CD14-positive monocyte (primary cell): ENCODE measurements at regions of chr1 and their contacts with region 1.

Region 1: DNA sequence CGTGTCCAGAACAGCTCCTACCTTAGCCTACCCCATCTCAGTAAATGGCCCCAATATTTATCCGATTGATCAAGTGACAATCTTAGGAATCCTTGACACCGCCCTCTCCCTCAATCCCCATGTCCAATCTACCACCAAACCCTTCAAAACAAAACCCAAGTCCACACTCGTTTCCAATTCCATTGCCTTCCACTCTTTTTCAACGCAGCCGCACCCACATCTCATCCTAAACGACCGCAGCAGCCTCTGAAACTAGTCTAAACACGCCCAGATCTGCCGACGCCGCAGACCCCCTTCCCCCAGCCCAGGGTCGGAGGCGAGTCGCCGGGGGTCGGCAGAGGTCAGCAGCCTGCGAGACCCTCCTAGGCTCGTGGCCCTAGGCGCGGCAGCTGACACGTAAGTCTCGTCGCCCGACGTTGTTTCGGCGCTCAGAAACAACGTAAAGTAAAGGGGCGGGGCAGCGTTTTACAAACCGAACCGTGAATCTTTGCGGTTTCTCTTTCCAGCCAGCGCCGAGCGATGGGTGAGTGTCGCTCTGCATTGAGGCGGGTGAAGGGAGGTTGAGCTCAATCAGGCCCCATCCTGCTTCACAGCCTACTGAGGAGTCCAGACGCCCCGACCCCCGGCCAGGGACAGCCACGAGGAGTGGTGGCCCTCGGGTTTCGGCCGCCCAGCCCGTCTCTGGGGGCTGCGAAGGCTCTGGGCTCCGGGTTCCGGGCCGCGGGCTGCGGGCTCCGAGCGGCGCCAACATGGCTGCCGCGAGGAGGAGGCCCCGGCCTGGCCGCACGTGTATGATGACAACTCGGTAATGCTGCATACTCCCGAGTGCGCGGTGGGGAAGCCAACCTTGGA is at the start of gene RPS8:
- DNase-seq: peak; percentile 88 to 91 (median 90)
- H3K4me3 ChIP-seq: peak within 1 kb of the TSS; percentile 81 to 90 (median 86)
- H3K4me3 Mint-ChIP-seq: peak within 1 kb of the TSS; percentile 92 to 96
- H3K27ac ChIP-seq: peak within 1 kb of the TSS; percentile 86 to 93
- H3K27ac Mint-ChIP-seq: peak within 1 kb of the TSS; percentile 96 to 100 (median 98)
- H3K4me1 ChIP-seq: peaks cover 23 to 31% of the 10 kb centered on the region in 2 donors
- H3K4me1 Mint-ChIP-seq: peaks cover 34% of the 10 kb centered on the region
- H3K27me3 ChIP-seq: no peaks in the 10 kb centered on the region
- H3K27me3 Mint-ChIP-seq: no peaks in the 10 kb centered on the region
- CTCF ChIP-seq: no peak
- polyA plus RNA-seq, gene RPS8: 413 to 1,619 (median 419) TPM

Region 2: DNA sequence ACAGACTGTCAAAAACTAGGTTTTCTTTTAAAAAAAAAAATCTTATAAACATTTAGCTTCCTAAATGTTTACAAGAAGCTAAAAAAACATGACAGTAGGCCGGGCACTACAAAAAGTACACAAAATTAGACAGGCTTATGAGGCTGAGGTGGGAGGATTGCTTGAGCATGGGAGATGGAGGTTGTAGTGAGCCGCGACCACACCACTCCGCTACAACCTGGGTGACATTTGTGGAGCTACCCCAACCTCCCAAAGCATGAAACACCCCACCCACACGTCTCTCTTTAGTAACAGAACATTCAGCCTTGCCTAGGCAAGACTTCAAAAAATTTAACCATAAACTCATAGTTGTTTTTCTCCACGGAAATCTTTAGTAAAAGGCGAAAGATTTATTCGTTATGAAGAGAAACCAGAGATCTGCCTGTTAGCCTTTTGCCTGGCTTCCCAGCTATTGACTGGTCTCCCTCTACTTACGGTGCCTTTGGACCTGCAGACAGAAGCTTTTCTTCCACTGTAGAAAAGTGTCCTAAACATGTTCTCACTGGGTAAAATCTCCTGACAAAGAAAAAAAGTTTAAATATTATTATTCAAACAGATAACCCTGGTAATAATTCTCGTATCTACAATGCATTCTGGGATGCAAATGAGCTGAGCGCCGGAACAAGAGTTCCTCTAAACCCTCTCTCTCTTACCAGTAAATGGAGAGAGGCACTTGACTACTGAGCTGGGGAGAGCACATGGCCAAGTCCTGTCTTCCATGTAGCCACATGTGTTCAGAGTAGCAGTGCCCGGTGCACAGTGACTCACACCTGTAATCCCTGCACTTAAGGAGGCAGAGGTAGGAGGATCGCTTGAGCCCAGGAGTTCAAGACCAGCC is 53.6 kb before region 1 on chr1:
- intact Hi-C with region 1: loop called in 1 of 2 experiments (anchors 10 kb)
- DNase-seq: peak; percentile 89 to 95 (median 91)
- H3K4me3 ChIP-seq: peak overlapping the region in 1 of 3 experiments; percentile 38
- H3K4me3 Mint-ChIP-seq: peak overlapping the region; percentile 1 to 71
- H3K27ac ChIP-seq: peak overlapping the region; percentile 55 to 89
- H3K27ac Mint-ChIP-seq: peak overlapping the region; percentile 92 to 98 (median 96)
- H3K4me1 ChIP-seq: peaks cover 42 to 56% of the 10 kb centered on the region in 2 donors
- H3K4me1 Mint-ChIP-seq: peaks cover 55% of the 10 kb centered on the region
- H3K27me3 ChIP-seq: no peaks in the 10 kb centered on the region
- H3K27me3 Mint-ChIP-seq: peaks cover 2 to 8% (median 4%) of the 10 kb centered on the region in 3 donors
- CTCF ChIP-seq: no peak

Region 3: DNA sequence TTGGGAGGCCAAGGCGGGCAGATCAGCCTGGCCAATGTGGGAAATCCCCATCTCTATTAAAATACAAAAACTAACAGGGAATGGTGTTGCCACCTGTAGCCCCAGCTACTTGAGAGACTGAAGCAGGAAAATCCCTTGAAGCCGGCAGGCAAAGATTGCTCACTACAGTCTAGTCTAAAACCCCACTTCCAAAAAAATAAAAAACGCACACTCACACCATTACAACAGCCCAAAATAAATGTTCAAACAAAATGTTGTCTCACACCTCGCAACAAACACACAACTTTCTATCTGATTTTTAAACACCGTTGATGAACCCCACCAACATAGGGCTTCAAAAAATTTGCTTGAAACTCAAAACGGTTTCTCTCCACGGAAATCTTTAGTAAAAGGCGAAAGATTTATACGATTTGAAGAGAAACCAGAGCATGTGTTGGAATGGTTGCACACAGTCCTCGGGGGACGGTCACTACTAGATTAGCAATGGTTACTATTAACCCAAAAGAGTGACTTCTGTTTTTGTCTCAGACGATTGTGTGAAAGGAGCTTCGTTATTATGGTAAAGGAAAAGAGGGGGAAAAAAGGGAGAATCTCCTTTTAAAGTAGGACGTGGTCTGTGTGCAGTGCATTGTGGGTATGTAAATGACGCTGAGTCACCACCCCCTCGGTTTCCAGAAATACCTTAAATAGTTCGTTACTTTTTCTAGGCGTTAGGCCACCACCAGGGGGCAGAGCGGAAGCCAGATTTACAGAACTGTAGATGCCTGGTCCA is 44.4 kb before region 1 on chr1 and contains the start of gene RNU5D-1:
- intact Hi-C with region 1: loop called (anchors 2 to 10 kb)
- DNase-seq: peak; percentile 93 to 98 (median 97)
- H3K4me3 ChIP-seq: peak within 1 kb of the TSS; percentile 29 to 54 (median 40)
- H3K4me3 Mint-ChIP-seq: peak within 1 kb of the TSS; percentile 32 to 82
- H3K27ac ChIP-seq: peak within 1 kb of the TSS; percentile 75 to 100
- H3K27ac Mint-ChIP-seq: peak within 1 kb of the TSS; percentile 99 to 100 (median 100)
- H3K4me1 ChIP-seq: peaks cover 37 to 40% of the 10 kb centered on the region in 2 donors
- H3K4me1 Mint-ChIP-seq: peaks cover 45% of the 10 kb centered on the region
- H3K27me3 ChIP-seq: no peaks in the 10 kb centered on the region
- H3K27me3 Mint-ChIP-seq: peaks cover 0 to 5% (median 0%) of the 10 kb centered on the region in 3 donors
- CTCF ChIP-seq: peak; percentile 90
- polyA plus RNA-seq, gene RNU5D-1: not detected

Region 4: DNA sequence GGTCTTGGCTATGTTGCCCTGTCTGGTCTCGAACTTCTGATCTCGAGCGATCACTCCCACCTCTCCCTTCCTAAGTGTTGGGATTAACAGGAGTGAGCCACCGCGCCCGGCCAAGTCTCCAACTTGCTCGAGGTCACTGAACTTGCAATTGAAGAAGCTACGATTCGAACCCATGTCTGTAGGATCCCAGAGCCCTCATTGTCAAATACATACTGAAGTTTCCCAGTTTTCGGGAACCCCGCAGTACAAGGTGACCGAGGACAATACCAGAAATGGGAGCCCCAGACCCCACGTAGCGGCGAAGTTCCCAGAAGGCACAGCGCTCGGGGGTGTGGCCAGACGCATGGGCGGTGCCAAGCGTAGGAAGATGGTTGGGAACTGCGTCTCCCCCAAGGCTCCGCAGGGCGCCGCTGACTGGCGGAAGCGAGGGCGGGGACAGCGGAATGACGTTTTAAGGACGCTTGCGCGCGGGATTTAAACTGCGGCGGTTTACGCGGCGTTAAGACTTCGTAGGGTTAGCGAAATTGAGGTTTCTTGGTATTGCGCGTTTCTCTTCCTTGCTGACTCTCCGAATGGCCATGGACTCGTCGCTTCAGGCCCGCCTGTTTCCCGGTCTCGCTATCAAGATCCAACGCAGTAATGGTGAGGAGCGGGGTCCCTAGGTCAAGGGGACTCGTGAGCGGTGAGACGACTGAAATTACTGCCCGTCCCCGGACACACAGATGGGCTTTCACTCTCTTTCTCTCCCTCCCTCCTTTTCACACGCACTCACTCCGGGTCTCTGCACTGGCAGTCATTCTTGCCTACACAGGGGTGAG is 35.7 kb before region 1 on chr1 and contains the start of gene KIF2C:
- intact Hi-C with region 1: loop called in 1 of 2 experiments (anchors 5 kb)
- DNase-seq: peak; percentile 96 to 98 (median 96)
- H3K4me3 ChIP-seq: peak within 1 kb of the TSS; percentile 73 to 93 (median 93)
- H3K4me3 Mint-ChIP-seq: peak within 1 kb of the TSS; percentile 95 to 96
- H3K27ac ChIP-seq: peak within 1 kb of the TSS; percentile 71 to 95
- H3K27ac Mint-ChIP-seq: peak within 1 kb of the TSS; percentile 95 to 98 (median 96)
- H3K4me1 ChIP-seq: peaks cover 20 to 25% of the 10 kb centered on the region in 2 donors
- H3K4me1 Mint-ChIP-seq: peaks cover 30% of the 10 kb centered on the region
- H3K27me3 ChIP-seq: no peaks in the 10 kb centered on the region
- H3K27me3 Mint-ChIP-seq: peaks cover 0 to 5% (median 0%) of the 10 kb centered on the region in 3 donors
- CTCF ChIP-seq: no peak
- polyA plus RNA-seq, gene KIF2C: 0.13 to 0.29 (median 0.24) TPM

Region 5: DNA sequence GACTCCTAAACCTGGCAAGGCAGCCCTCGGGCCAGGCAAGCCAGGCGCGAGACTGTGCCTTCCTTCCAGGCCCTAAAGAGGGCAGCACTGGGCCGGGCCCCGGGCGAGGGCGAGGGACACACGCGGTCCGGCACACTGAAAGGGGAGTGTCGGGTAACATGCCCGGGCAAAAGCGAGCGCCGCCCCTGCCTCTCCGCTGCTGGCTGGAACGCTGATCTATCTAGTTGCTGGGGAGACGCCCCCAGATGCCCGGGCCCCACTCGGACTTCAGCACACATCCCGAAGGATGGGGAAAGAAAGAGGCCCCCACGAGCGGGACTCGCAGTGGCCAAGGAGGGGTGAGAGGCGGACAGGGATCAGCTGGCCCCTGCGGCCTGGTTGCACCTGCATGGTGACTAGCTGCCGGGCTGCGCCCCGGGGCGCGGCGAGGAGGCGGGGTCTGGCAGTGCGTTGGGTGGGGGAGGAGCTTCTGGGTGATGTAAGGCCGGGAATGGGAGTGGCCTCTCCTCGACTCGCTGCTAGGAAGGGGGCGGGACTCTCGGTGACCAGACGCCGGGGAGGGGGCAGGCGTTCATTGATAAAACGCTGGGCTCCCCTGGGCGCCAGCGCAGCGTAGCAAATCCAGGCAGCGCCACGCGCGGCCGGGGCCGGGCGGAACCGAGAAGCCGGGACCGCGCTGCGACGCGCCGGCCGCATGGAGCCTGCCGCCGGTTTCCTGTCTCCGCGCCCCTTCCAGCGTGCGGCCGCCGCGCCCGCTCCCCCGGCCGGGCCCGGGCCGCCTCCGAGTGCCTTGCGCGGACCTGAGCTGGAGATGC is 24.7 kb after region 1 on chr1 and contains the start of gene PLK3:
- intact Hi-C with region 1: no loop called
- DNase-seq: peak; percentile 97 to 99 (median 99)
- H3K4me3 ChIP-seq: peak within 1 kb of the TSS; percentile 60 to 99 (median 76)
- H3K4me3 Mint-ChIP-seq: peak within 1 kb of the TSS; percentile 94 to 98
- H3K27ac ChIP-seq: peak within 1 kb of the TSS; percentile 90 to 95
- H3K27ac Mint-ChIP-seq: peak within 1 kb of the TSS; percentile 98 to 100 (median 99)
- H3K4me1 ChIP-seq: peaks cover 29 to 38% of the 10 kb centered on the region in 2 donors
- H3K4me1 Mint-ChIP-seq: peaks cover 20% of the 10 kb centered on the region
- H3K27me3 ChIP-seq: no peaks in the 10 kb centered on the region
- H3K27me3 Mint-ChIP-seq: peaks cover 1 to 9% (median 4%) of the 10 kb centered on the region in 3 donors
- CTCF ChIP-seq: peak; percentile 90
- polyA plus RNA-seq, gene PLK3: 15.8 to 285 (median 28.1) TPM

Region 6: GRCh38 chr1:44862829-44863401 is 87.6 kb after region 1 on chr1:
- intact Hi-C with region 1: no loop called
- DNase-seq: no peak
- H3K4me3 ChIP-seq: no peak overlapping the region
- H3K4me3 Mint-ChIP-seq: no peak overlapping the region
- H3K27ac ChIP-seq: no peak overlapping the region
- H3K27ac Mint-ChIP-seq: no peak overlapping the region
- H3K4me1 ChIP-seq: peaks cover 19 to 24% of the 10 kb centered on the region in 2 donors
- H3K4me1 Mint-ChIP-seq: peaks cover 20% of the 10 kb centered on the region
- H3K27me3 ChIP-seq: no peaks in the 10 kb centered on the region
- H3K27me3 Mint-ChIP-seq: no peaks in the 10 kb centered on the region
- CTCF ChIP-seq: no peak

Region 7: GRCh38 chr1:44985747-44986359 is 210.5 kb after region 1 on chr1:
- intact Hi-C with region 1: loop called in 1 of 2 experiments (anchors 10 kb)
- DNase-seq: no peak
- H3K4me3 ChIP-seq: peak overlapping the region; percentile 53 to 78 (median 63)
- H3K4me3 Mint-ChIP-seq: peak overlapping the region; percentile 98
- H3K27ac ChIP-seq: peak overlapping the region; percentile 65 to 78
- H3K27ac Mint-ChIP-seq: peak overlapping the region; percentile 89 to 98 (median 94)
- H3K4me1 ChIP-seq: peaks cover 14 to 21% of the 10 kb centered on the region in 2 donors
- H3K4me1 Mint-ChIP-seq: peaks cover 16% of the 10 kb centered on the region
- H3K27me3 ChIP-seq: no peaks in the 10 kb centered on the region
- H3K27me3 Mint-ChIP-seq: no peaks in the 10 kb centered on the region
- CTCF ChIP-seq: no peak